OCI-LY7 (cell line): ENCODE measurements at regions of chr9 and their contacts with region 1.

Region 1: GRCh38 chr9:111631071-111631971 is at the start of gene DNAJC25:
- DNase-seq: peak; percentile 99
- H3K4me3 ChIP-seq: peak within 1 kb of the TSS; percentile 88
- H3K27ac ChIP-seq: peak within 1 kb of the TSS; percentile 59
- H3K4me1 ChIP-seq: peaks cover 26% of the 10 kb centered on the region
- CTCF ChIP-seq: no peak
- total RNA-seq, gene DNAJC25: 4.9 and 5.8 TPM in 2 replicates

Region 2: DNA sequence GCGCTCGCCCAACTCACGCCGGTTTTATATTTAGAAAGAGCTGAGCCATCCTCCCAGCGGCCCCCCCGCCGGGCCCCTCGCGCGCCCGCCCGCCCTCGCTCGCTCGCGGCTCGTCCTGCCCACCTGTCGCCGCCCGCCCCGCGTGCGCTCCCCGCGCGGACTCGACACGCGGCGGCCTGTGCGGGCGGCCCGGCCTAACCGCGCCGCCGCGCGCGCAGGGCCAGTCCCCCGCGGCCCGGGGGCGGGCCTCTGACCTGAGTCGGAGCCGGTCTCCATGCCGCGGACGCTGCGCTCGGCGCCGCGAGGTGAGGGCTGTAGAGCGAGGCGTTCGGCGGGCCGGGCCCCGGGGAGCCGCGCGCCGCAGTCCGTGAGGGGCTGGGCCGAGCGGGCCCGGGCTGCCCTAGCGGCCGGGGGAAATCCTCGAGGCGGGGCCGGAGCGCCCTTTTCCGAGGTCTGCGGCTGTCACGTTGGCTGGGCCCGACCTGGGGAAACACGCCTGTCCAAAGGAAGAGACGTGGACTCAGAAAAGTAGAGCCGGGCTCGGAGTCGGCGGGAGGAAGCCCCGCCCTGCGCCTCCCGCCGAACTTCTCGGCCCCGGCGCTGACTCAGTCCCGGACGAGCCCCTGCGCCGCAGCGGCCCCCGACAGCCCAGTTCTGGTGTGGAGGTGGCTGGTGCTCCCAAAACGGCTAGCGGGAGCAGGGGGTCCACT is 147.3 kb before region 1 on chr9 and contains the start of gene ECPAS:
- CTCF ChIA-PET with region 1: no interaction called
- POLR2A ChIA-PET with region 1: interaction called, 4 read pairs
- intact Hi-C with region 1: loop called (anchors 1 kb)
- DNase-seq: peak; percentile 79
- H3K4me3 ChIP-seq: peak within 1 kb of the TSS; percentile 99
- H3K27ac ChIP-seq: peak within 1 kb of the TSS; percentile 72
- H3K4me1 ChIP-seq: peaks cover 9% of the 10 kb centered on the region
- CTCF ChIP-seq: no peak
- total RNA-seq, gene ECPAS: 41.0 and 47.3 TPM in 2 replicates

Region 3: DNA sequence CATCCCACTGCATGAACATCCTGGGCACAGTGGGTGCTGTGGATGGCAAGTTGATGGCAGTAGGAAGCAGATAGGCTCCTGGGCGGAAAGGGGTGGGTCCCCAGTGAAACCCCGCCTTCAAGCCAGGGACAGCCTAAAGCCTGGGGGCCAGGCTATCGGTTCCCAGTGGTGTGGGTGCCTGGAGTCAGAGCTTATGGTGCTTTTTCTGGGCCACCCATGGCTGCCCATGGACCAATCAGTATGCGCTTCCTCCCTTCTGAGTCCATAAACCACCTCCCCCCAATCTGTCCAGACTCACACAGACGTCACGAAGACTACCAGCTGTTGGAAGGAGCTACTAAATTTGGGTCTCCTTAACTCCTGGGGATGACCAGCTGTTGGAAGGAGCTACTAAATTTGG is 129.7 kb before region 1 on chr9:
- CTCF ChIA-PET with region 1: no interaction called
- POLR2A ChIA-PET with region 1: no interaction called
- intact Hi-C with region 1: no loop called
- DNase-seq: no peak
- H3K4me3 ChIP-seq: no peak overlapping the region
- H3K27ac ChIP-seq: no peak overlapping the region
- H3K4me1 ChIP-seq: no peaks in the 10 kb centered on the region
- CTCF ChIP-seq: no peak

Region 4: DNA sequence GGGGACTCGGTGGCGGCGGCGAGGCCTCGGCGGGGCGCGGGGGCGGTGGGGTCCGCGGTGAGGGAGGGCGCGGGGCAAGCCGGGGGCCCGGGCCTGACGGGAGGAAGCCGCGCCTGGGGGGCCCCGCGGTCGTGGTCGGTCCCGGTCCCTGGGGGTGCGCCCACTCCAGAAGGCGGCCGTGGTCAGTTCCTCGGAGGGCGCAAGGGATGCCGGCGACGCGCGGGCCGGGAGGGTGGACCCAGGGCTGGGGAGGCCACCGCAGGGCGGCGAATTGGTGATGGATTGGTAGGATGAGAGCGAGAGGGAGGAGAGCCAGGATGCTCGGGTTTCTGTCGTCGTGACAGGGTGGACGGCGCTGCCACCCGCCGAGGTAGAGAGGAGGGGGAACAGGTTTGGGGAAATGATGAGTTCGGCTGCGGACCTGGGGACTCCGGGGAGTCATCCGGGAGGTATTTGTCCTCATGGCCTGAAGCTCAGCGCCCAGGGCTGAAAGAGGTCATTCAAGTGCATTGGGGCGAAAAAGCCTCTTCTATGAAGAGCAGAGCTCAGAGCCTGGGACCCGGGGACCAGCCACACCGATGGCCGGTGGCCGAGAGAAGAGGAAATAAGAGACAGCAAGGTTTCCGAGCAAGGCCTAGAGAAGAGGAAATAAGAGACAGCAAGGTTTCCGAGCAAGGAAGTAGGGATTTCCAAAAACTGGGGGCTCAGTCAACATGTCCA is 30.6 kb after region 1 on chr9:
- CTCF ChIA-PET with region 1: interaction called, 3 read pairs
- POLR2A ChIA-PET with region 1: no interaction called
- intact Hi-C with region 1: loop called (anchors 1 kb)
- DNase-seq: peak; percentile 39
- H3K4me3 ChIP-seq: peak overlapping the region; percentile 77
- H3K27ac ChIP-seq: no peak overlapping the region
- H3K4me1 ChIP-seq: peaks cover 20% of the 10 kb centered on the region
- CTCF ChIP-seq: no peak